Activated CD4-positive, alpha-beta T cell treated with anti-CD3 and anti-CD28 coated beads for 36 hours (primary cell): ENCODE measurements at regions of chr1 and their contacts with region 1.

Region 1: DNA sequence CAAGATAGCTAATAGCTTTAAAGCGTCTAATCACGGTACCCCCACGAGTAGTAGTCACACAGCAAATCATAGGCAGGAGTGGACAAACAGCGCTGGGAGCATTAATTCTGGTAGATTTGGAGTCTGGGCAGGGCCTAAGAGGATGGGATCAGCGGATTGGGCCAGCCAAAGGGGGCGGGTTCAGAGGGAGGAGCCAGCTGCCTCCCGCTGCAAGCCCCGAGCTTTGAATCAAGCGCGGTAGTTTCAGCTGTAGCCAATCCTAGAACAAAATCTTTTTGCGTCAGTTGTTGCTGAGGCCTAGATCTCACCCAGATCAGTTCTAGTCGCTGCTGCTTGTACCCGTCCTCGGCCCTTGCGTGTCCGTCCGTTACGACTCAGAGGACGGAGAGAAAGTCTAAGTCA is 576 bp upstream of the NASP start:
- DNase-seq: peak; percentile 97
- ATAC-seq: peak; percentile 84
- H3K4me3 Mint-ChIP-seq: peak overlapping the region; percentile 91
- H3K27ac Mint-ChIP-seq: peak overlapping the region; percentile 100
- H3K4me1 Mint-ChIP-seq: peaks cover 20% of the 10 kb centered on the region
- H3K27me3 Mint-ChIP-seq: no peaks in the 10 kb centered on the region

Region 2: GRCh38 chr1:44739361-44740178 is 843.7 kb before region 1 on chr1 and contains the start of gene KIF2C:
- CTCF ChIA-PET with region 1: no interaction called
- POLR2A ChIA-PET with region 1: no interaction called
- intact Hi-C with region 1: loop called (anchors 1 to 10 kb)
- DNase-seq: peak; percentile 99
- ATAC-seq: peak; percentile 98
- H3K4me3 Mint-ChIP-seq: peak within 1 kb of the TSS; percentile 98
- H3K27ac Mint-ChIP-seq: peak within 1 kb of the TSS; percentile 94
- H3K4me1 Mint-ChIP-seq: peaks cover 26% of the 10 kb centered on the region
- H3K27me3 Mint-ChIP-seq: no peaks in the 10 kb centered on the region
- total RNA-seq, gene KIF2C: 101 to 119 TPM

Region 3: GRCh38 chr1:45205910-45206721 is 377.1 kb before region 1 on chr1 and contains the start of gene ZSWIM5:
- CTCF ChIA-PET with region 1: no interaction called
- POLR2A ChIA-PET with region 1: no interaction called
- intact Hi-C with region 1: loop called in 1 of 2 experiments (anchors 1 kb)
- DNase-seq: peak; percentile 75
- ATAC-seq: peak; percentile 80
- H3K4me3 Mint-ChIP-seq: peak within 1 kb of the TSS; percentile 82
- H3K27ac Mint-ChIP-seq: peak within 1 kb of the TSS; percentile 87
- H3K4me1 Mint-ChIP-seq: peaks cover 33% of the 10 kb centered on the region
- H3K27me3 Mint-ChIP-seq: peaks cover 18% of the 10 kb centered on the region
- total RNA-seq, gene ZSWIM5: 0.63 to 0.69 TPM

Region 4: DNA sequence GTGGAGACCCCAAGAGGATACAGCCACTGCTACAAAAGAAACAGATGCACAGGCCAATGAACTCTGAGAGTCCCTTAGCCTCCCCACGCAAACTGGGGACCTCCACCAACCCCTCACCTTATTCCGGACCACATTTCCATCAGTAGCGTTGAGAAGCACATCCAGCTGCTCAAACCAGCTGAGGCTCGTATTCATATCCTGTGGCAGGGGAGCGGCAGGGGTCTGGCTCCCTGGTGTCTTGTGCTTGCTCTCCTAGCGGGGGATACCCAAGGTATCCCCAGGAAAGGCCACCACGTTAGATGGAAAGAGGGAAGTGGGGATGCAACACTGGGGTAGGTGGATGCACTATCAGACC is 83.9 kb before region 1 on chr1:
- CTCF ChIA-PET with region 1: interaction called, 5 read pairs
- POLR2A ChIA-PET with region 1: interaction called, 18 read pairs
- intact Hi-C with region 1: loop called in 1 of 2 experiments (anchors 1 kb)
- DNase-seq: peak; percentile 45
- ATAC-seq: no peak
- H3K4me3 Mint-ChIP-seq: peak overlapping the region; percentile 81
- H3K27ac Mint-ChIP-seq: peak overlapping the region; percentile 92
- H3K4me1 Mint-ChIP-seq: peaks cover 23% of the 10 kb centered on the region
- H3K27me3 Mint-ChIP-seq: no peaks in the 10 kb centered on the region

Region 5: GRCh38 chr1:45543581-45544417 is 39.5 kb before region 1 on chr1:
- CTCF ChIA-PET with region 1: no interaction called
- POLR2A ChIA-PET with region 1: no interaction called
- intact Hi-C with region 1: no loop called
- DNase-seq: peak; percentile 81
- ATAC-seq: peak; percentile 92
- H3K4me3 Mint-ChIP-seq: peak overlapping the region; percentile 30
- H3K27ac Mint-ChIP-seq: peak overlapping the region; percentile 72
- H3K4me1 Mint-ChIP-seq: peaks cover 31% of the 10 kb centered on the region
- H3K27me3 Mint-ChIP-seq: no peaks in the 10 kb centered on the region

Region 6: GRCh38 chr1:45594412-45594811 is 11.1 kb after region 1 on chr1:
- CTCF ChIA-PET with region 1: interaction called, 4 read pairs
- POLR2A ChIA-PET with region 1: interaction called, 10 read pairs
- intact Hi-C with region 1: no loop called
- DNase-seq: no peak
- ATAC-seq: no peak
- H3K4me3 Mint-ChIP-seq: no peak overlapping the region
- H3K27ac Mint-ChIP-seq: no peak overlapping the region
- H3K4me1 Mint-ChIP-seq: peaks cover 32% of the 10 kb centered on the region
- H3K27me3 Mint-ChIP-seq: no peaks in the 10 kb centered on the region

Region 7: DNA sequence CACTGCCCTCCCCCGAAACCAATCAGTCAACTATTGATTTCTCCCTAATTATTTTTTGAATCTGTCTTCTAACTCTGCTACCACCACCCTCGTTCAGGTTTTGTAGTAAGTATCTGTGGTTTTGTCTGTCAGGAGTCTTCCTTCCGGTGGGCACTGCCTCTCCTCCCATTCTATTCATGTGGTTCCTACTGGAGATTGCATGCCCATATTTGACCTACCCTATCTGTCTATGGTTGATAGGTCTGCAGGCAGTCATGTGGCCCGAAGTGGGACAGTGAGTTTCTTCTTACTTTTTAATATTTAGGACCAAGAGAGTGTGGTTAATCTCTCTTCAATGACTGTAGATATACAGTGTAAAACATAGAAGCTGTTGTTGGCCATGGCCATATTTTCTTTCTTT is 202.3 kb after region 1 on chr1:
- CTCF ChIA-PET with region 1: no interaction called
- POLR2A ChIA-PET with region 1: no interaction called
- intact Hi-C with region 1: no loop called
- DNase-seq: peak; percentile 44
- ATAC-seq: peak; percentile 96
- H3K4me3 Mint-ChIP-seq: peak overlapping the region; percentile 60
- H3K27ac Mint-ChIP-seq: peak overlapping the region; percentile 47
- H3K4me1 Mint-ChIP-seq: peaks cover 13% of the 10 kb centered on the region
- H3K27me3 Mint-ChIP-seq: peaks cover 3% of the 10 kb centered on the region

Region 8: DNA sequence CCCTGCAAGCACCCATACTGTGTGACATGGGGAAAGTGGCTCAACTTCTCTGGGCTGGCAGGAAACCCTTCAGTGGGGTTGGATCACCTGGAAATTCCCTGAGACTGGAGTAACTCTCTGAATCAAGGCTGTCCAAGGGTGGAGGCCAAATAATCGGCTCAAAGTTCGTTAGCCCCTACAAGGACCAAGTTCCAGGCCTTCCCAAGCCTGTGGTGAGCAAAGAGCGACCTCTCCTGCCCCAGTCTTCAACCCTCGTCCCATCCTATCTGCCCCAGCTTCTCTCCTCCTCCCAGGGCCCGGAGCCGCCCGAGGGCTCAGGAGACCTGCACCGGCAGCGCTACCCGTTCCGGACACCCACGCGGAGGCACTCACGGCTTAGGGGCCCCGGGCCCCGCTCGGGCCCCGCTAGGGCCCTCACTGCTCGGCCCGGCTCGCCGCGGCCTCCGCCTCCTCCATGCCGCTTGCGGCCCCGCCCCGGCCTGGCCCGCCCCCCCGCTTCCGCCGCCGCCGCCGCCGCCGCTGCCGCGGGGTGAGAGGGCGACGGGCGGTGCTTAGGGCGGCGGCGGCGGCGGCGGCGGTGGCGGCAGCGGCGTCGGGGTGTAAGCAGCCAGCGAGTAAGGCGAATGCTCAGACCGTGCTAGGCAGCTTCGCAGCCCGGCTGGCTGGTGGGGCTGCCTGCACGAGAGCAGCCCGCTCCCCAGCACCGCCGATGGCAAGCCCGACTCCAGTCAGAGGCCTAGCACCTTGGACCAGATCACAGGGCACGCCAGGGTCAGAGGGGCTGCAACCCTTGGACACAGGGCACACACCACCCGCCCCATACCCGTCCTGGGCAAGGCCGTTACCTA is 614.9 kb after region 1 on chr1 and contains the start of gene POMGNT1:
- CTCF ChIA-PET with region 1: no interaction called
- POLR2A ChIA-PET with region 1: no interaction called
- intact Hi-C with region 1: loop called in 1 of 2 experiments (anchors 1 kb)
- DNase-seq: peak; percentile 87
- ATAC-seq: peak; percentile 94
- H3K4me3 Mint-ChIP-seq: peak within 1 kb of the TSS; percentile 84
- H3K27ac Mint-ChIP-seq: peak within 1 kb of the TSS; percentile 82
- H3K4me1 Mint-ChIP-seq: peaks cover 19% of the 10 kb centered on the region
- H3K27me3 Mint-ChIP-seq: peaks cover 2% of the 10 kb centered on the region
- total RNA-seq, gene POMGNT1: 36.4 to 36.5 TPM